A673 (cell line): ENCODE measurements at regions of chr3 and their contacts with region 1.

Region 1: DNA sequence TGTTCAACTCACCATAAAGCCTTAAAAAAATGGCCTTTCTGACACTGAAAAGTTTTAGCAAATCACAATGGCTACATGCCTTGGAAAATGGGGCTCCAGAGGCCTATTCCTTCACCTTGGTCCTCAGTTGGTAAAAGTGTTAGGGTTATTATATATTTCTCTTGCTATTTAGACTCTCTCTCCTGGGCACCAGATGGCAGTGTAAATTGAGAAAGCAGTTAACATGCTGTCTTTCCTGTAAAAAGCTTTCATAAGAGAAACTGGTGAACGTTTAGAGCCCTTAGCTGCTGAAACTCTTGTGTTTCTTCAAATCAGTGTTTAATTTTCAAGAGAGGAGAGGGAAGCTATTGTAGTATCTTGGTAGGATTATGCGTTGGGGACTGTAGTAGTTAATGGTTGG is 89.9 kb downstream of the LRTM1 start:
- DNase-seq: no peak
- H3K4me3 ChIP-seq: no peak overlapping the region
- H3K27ac ChIP-seq: no peak overlapping the region
- H3K4me1 ChIP-seq: no peaks in the 10 kb centered on the region
- H3K27me3 ChIP-seq: no peaks in the 10 kb centered on the region
- CTCF ChIP-seq: peak; percentile 40; the same call in 1 of the 2 replicates

Region 2: GRCh38 chr3:54822206-54822605 is 15.8 kb before region 1 on chr3:
- CTCF ChIA-PET with region 1: no interaction called
- POLR2A ChIA-PET with region 1: interaction called, 11 read pairs
- intact Hi-C with region 1: no loop called
- DNase-seq: peak; percentile 53
- H3K4me3 ChIP-seq: no peak overlapping the region
- H3K27ac ChIP-seq: no peak overlapping the region
- H3K4me1 ChIP-seq: peaks cover 24% of the 10 kb centered on the region
- H3K27me3 ChIP-seq: peaks cover 53% of the 10 kb centered on the region
- CTCF ChIP-seq: no peak